WTC11 (cell line): ENCODE measurements at regions of chr9 and their contacts with region 1.

Region 1: GRCh38 chr9:134175808-134176598 is 11.6 kb upstream of the RNU6ATAC start:
- DNase-seq: no peak
- ATAC-seq: peak; percentile 6; the same call in 1 of the 2 replicates
- H3K4me3 Mint-ChIP-seq: no peak overlapping the region
- H3K27ac Mint-ChIP-seq: no peak overlapping the region
- H3K4me1 Mint-ChIP-seq: peaks cover 3% of the 10 kb centered on the region
- H3K27me3 Mint-ChIP-seq: no peaks in the 10 kb centered on the region
- CTCF ChIP-seq: no peak

Region 2: GRCh38 chr9:134163353-134164196 is 12.4 kb before region 1 on chr9:
- CTCF ChIA-PET with region 1: interaction called, 26 read pairs
- POLR2A ChIA-PET with region 1: no interaction called
- DNase-seq: peak; percentile 65
- ATAC-seq: no peak; the same call in none of the 2 replicates
- H3K4me3 Mint-ChIP-seq: no peak overlapping the region
- H3K27ac Mint-ChIP-seq: no peak overlapping the region
- H3K4me1 Mint-ChIP-seq: peaks cover 8% of the 10 kb centered on the region; the same call in 1 of the 2 replicates
- H3K27me3 Mint-ChIP-seq: no peaks in the 10 kb centered on the region; the same call in 1 of the 2 replicates
- CTCF ChIP-seq: no peak

Region 3: GRCh38 chr9:134217832-134218629 is 42.0 kb after region 1 on chr9:
- CTCF ChIA-PET with region 1: interaction called, 13 read pairs
- POLR2A ChIA-PET with region 1: no interaction called
- DNase-seq: no peak
- ATAC-seq: no peak; the same call in 1 of the 2 replicates
- H3K4me3 Mint-ChIP-seq: no peak overlapping the region
- H3K27ac Mint-ChIP-seq: 0 out of 2 replicates have a peak overlapping the region, but pooled peaks have one; percentile 5
- H3K4me1 Mint-ChIP-seq: peaks cover 15% of the 10 kb centered on the region
- H3K27me3 Mint-ChIP-seq: no peaks in the 10 kb centered on the region
- CTCF ChIP-seq: no peak

Region 4: GRCh38 chr9:134275375-134275774 is 99.4 kb after region 1 on chr9:
- CTCF ChIA-PET with region 1: interaction called, 12 read pairs
- POLR2A ChIA-PET with region 1: no interaction called
- DNase-seq: peak; percentile 47
- ATAC-seq: peak; percentile 94
- H3K4me3 Mint-ChIP-seq: no peak overlapping the region
- H3K27ac Mint-ChIP-seq: no peak overlapping the region
- H3K4me1 Mint-ChIP-seq: peaks cover 12% of the 10 kb centered on the region
- H3K27me3 Mint-ChIP-seq: no peaks in the 10 kb centered on the region; the same call in 1 of the 2 replicates
- CTCF ChIP-seq: no peak

Region 5: GRCh38 chr9:134438195-134438788 is 262.3 kb after region 1 on chr9:
- CTCF ChIA-PET with region 1: interaction called, 54 read pairs
- POLR2A ChIA-PET with region 1: interaction called, 3 read pairs
- DNase-seq: peak; percentile 55
- ATAC-seq: peak; percentile 38
- H3K4me3 Mint-ChIP-seq: no peak overlapping the region
- H3K27ac Mint-ChIP-seq: no peak overlapping the region
- H3K4me1 Mint-ChIP-seq: no peaks in the 10 kb centered on the region
- H3K27me3 Mint-ChIP-seq: no peaks in the 10 kb centered on the region
- CTCF ChIP-seq: 0 out of 2 replicates have a peak, but pooled peaks have one; percentile 22

Region 6: DNA sequence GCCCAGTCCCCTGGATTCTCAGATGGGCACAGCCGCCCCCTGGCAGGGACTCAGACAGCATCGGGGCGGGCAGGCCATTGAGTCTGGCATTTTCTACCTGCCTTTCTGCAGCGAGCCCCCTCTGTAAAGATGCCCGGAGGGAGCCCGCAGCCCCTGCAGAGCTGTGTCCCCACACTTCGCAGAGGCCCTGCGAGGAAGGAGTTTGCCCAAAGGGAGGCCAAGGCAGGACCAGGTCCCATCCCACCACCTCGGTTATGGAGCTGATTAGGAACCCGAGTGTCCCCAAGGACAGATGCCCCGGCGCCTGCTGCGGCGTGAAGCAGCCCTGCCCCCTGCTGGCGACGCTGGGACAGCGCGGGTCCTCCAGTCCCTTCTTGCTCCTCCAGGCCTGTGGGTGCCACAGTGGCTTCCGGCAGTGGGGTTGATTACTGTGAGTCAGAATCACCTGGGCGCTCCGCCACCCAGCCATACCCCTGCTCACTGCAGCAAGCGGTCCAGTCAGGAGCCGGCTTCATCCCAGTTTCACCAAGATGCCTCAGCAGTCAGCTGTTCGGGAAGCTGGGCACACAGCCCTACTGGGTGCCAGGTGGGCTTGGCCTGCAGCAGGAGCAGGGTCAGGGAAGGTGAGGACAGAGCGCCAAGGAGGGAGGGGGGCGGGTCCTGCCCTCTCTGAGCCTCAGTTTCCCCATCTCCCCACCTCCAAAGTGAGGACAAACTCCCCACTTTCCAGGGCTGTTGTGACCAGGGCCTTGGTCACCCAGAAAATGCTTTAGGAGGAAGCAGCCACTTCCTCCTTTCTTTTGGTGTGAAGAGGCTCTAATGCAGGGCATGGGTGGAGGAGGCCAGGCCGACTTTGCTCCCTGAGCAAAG is 267.4 kb after region 1 on chr9:
- CTCF ChIA-PET with region 1: interaction called, 54 read pairs
- POLR2A ChIA-PET with region 1: interaction called, 3 read pairs
- DNase-seq: peak; percentile 83
- ATAC-seq: peak; percentile 83
- H3K4me3 Mint-ChIP-seq: no peak overlapping the region
- H3K27ac Mint-ChIP-seq: no peak overlapping the region
- H3K4me1 Mint-ChIP-seq: no peaks in the 10 kb centered on the region
- H3K27me3 Mint-ChIP-seq: no peaks in the 10 kb centered on the region; the same call in 1 of the 2 replicates
- CTCF ChIP-seq: peak; percentile 80

Region 7: DNA sequence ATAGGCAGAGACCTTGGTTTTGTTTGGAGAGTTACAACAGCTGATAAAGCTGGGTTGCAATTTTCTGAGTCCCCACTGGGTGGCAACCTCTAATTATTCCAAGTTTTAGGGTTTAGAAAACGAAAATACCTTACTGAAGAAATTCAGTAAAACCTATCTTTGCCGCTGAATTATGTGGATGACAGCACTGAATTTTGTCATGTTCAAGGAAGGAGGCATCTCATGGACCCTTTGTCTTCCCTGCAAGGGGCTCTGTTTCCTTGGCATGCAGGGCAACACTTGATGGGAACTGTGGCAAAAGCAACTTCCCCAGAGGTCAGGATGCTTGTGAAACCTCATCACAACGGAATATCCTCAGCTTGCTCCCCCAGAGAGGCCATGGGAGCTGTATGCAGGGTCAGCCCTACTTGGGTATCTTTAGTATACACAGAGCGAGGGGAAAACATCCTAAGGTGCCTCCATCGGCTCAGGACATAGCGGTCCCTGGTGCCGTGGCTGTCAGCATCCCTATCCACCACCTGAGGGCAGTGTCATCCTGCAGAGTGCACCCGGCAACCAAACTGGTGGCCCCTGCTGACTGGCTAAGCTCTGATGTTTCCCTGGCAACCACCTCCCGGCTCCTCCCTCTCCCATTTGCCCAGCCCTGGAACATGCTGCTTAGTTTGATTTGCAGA is 273.4 kb after region 1 on chr9:
- CTCF ChIA-PET with region 1: interaction called, 18 read pairs
- POLR2A ChIA-PET with region 1: no interaction called
- DNase-seq: peak; percentile 91
- ATAC-seq: peak; percentile 99
- H3K4me3 Mint-ChIP-seq: no peak overlapping the region
- H3K27ac Mint-ChIP-seq: no peak overlapping the region
- H3K4me1 Mint-ChIP-seq: no peaks in the 10 kb centered on the region
- H3K27me3 Mint-ChIP-seq: peaks cover 3% of the 10 kb centered on the region; the same call in 1 of the 2 replicates
- CTCF ChIP-seq: peak; percentile 58